Endothelial cell of umbilical vein (primary cell): ENCODE measurements at regions of chr20 and their contacts with region 1.

Region 1: GRCh38 chr20:1734269-1734858 is 76.8 kb upstream of the SIRPG start:
- DNase-seq: peak; percentile 15
- H3K4me3 ChIP-seq: no peak overlapping the region
- H3K27ac ChIP-seq: no peak overlapping the region
- H3K4me1 ChIP-seq: no peaks in the 10 kb centered on the region
- H3K27me3 ChIP-seq: peaks cover 0 to 2% of the 10 kb centered on the region in 2 experiments
- CTCF ChIP-seq: no peak
- POLR2A ChIP-seq: no peak

Region 2: DNA sequence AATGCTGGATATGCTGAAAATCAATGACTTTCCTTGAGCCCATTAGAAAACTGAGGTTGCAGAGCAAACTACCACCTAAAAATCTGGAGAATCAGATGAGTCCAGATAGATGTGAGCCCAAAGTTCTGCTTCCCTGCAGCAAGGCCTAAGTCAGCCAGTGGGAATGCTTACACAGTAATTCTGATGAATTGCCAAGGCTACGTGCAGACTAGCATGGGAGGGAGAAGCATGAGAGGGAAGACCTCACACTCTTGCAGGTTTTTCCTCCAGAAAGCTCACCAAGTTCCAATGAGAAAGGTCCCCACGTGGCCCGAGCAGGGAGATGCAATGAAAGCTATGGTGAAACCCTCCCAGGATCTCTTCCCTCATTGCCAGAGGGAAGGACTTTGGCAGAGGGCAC is 56.0 kb after region 1 on chr20:
- CTCF ChIA-PET with region 1: no interaction called
- POLR2A ChIA-PET with region 1: no interaction called
- dilution Hi-C with region 1: no loop called
- intact Hi-C with region 1: loop called (anchors 2 kb)
- DNase-seq: no peak
- H3K4me3 ChIP-seq: no peak overlapping the region
- H3K27ac ChIP-seq: no peak overlapping the region
- H3K4me1 ChIP-seq: peaks cover 17% of the 10 kb centered on the region
- H3K27me3 ChIP-seq: peaks cover 21 to 33% of the 10 kb centered on the region in 2 experiments
- CTCF ChIP-seq: no peak
- POLR2A ChIP-seq: no peak